ENCODE measurements at regions of chr18 and their contacts with region 1.

Region 1: DNA sequence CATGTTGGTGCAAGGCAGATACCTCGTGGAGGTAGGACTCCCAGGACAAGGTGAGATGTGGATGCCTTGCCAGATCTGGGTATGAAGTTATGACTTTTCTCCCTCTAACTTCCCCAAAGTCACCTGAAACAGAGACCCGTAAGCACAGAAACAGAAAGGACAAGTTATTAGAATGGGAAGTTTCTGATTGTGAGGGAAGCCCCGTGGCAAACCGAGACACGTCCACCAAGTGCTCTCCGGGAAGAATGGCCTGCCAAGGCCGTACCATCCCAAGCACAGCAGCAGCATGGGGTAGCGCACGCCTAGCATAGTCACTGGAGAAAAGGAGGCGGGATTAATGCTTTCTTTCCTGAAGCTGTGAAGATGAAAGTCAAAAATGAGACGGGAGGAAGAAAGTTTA is 110.6 kb downstream of the ZNF532 start:
- DNase-seq: no peak
- H3K4me3 ChIP-seq: no peak overlapping the region
- H3K27ac ChIP-seq: peak overlapping the region; percentile 73 to 87
- H3K4me1 ChIP-seq: peaks cover 16% of the 10 kb centered on the region
- H3K27me3 ChIP-seq: no peaks in the 10 kb centered on the region
- CTCF ChIP-seq: no peak
- POLR2A ChIP-seq: no peak

Region 2: GRCh38 chr18:58864146-58865032 is 110.9 kb before region 1 on chr18 and contains the start of gene ZNF532:
- intact Hi-C with region 1: loop called (anchors 5 kb)
- DNase-seq: peak; percentile 63
- H3K4me3 ChIP-seq: peak within 1 kb of the TSS; percentile 31 to 55
- H3K27ac ChIP-seq: peak within 1 kb of the TSS; percentile 98 to 100
- H3K4me1 ChIP-seq: peaks cover 12% of the 10 kb centered on the region
- H3K27me3 ChIP-seq: no peaks in the 10 kb centered on the region
- CTCF ChIP-seq: no peak
- POLR2A ChIP-seq: no peak
- total RNA-seq, gene ZNF532: 231 to 299 TPM

Measured in prostate gland (tissue), 2 donors.